Activated CD4-positive, alpha-beta memory T cell treated with anti-CD3 and anti-CD28 coated beads, Interleukin-2, amount 10 ng/mL, durations not matched to agents 7 days and 5 days (primary cell): ENCODE measurements at regions of chr2 and their contacts with region 1.

Region 1: DNA sequence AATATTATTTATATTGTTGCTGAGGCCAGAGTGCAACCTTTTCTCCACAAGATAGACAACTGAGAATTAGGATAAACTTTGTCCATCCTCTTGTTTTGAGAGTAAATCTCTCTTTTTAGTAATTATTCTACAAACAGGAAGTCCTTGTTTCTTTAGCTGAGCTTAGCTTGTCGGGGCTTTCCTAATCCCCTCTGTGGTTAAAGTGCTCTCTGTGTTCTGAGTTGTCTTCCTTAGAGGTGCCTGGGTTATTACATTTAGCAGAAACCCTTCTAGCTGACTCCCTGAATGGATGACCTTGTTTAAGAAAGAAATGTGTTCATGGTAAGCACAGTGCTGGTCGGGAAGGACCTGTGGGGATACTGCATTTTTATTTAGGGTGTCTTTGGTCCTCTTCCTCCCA is 12.7 kb downstream of the USP39 start:
- DNase-seq: no peak
- H3K4me3 Mint-ChIP-seq: no peak overlapping the region
- H3K27ac Mint-ChIP-seq: peak overlapping the region; percentile 59
- H3K4me1 Mint-ChIP-seq: peaks cover 14% of the 10 kb centered on the region
- H3K27me3 Mint-ChIP-seq: no peaks in the 10 kb centered on the region

Region 2: GRCh38 chr2:85611705-85612587 is 16.7 kb before region 1 on chr2 and contains the start of gene C2orf68:
- CTCF ChIA-PET with region 1: no interaction called
- POLR2A ChIA-PET with region 1: interaction called, 16 read pairs
- DNase-seq: peak; percentile 90
- H3K4me3 Mint-ChIP-seq: peak within 1 kb of the TSS; percentile 94
- H3K27ac Mint-ChIP-seq: peak within 1 kb of the TSS; percentile 86
- H3K4me1 Mint-ChIP-seq: peaks cover 46% of the 10 kb centered on the region
- H3K27me3 Mint-ChIP-seq: no peaks in the 10 kb centered on the region
- total RNA-seq, gene C2orf68: 48.8 to 50.9 TPM

Region 3: DNA sequence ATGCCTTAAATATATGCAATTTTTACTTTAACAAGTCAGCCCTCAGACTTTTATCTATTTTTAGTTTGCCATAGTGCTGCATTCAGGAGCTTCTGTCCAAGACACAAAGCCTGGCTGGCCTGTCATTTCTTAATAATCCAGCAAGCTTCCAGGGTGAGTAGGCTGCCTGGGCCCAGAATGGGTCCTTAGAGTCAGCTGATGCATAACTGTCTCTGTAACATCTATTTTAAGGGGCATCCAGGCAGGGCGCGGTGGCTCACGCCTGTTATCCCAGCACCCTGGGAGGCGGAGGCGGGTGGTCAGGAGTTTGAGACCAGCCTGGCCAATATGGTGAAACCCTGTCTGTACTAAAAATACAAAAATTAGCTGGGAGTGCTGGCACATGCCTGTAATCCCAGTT is 53.7 kb after region 1 on chr2:
- CTCF ChIA-PET with region 1: no interaction called
- POLR2A ChIA-PET with region 1: no interaction called
- DNase-seq: no peak
- H3K4me3 Mint-ChIP-seq: peak overlapping the region; percentile 87
- H3K27ac Mint-ChIP-seq: peak overlapping the region; percentile 94
- H3K4me1 Mint-ChIP-seq: peaks cover 38% of the 10 kb centered on the region
- H3K27me3 Mint-ChIP-seq: peaks cover 12% of the 10 kb centered on the region

Region 4: DNA sequence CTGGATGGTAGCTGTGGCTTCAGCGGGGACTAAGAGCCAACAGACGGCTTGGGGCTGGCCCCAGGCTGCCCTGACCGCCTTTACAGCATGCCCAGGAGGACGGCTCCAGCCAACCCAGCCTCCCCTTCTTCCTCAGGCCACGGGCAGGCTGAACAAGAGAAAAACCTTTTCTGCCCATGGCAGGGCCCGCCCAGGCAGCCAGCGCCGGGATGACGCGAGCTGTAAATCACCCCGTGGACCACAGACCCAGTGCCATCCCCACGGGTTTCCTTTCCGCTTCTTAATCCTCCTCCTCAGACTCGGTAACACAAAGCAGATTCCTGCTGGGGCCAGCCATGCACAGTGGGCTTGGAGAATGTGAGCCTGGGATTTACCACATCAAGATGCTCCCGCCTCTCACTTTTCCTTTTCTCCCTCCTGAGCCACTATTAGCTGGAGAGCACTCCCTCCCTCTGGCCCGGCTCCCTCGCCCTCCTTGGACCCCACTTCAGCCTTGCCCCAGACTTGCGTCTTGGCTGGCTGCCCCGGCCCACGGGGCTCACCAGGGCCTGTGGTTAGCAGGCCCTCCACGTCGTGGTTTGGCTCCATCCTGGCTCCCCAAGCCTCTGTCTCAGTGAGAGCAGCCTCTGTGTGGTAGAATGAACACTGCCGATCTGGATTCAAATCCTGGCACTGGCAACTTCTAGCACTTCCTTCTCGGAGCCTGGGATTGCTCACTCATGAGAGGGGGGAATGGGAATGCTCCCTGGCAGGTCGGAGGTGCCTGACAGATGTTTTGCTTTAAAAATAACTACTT is 156.6 kb after region 1 on chr2:
- CTCF ChIA-PET with region 1: no interaction called
- POLR2A ChIA-PET with region 1: no interaction called
- DNase-seq: no peak
- H3K4me3 Mint-ChIP-seq: no peak overlapping the region
- H3K27ac Mint-ChIP-seq: no peak overlapping the region
- H3K4me1 Mint-ChIP-seq: no peaks in the 10 kb centered on the region
- H3K27me3 Mint-ChIP-seq: peaks cover 11% of the 10 kb centered on the region

Region 5: DNA sequence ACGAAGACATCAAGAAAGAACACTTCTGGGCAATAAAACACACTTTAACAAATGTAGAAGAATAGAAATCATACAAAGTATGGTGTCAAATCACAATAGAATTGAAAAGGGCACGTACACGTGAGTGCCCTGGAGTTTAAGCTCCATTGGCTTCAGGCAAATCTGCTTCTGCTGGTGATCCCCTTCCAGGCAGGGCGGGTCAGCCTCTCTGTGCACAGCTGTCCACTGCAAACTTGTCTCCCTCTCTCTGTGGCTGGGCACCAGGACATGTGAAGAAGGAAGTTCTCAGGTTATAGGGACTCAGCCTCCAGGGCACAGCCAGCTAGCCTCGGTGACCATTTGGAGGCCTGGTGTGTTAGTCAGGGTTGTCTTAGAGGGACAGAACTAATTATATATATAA is 194.1 kb after region 1 on chr2:
- CTCF ChIA-PET with region 1: no interaction called
- POLR2A ChIA-PET with region 1: no interaction called
- DNase-seq: peak; percentile 15
- H3K4me3 Mint-ChIP-seq: no peak overlapping the region
- H3K27ac Mint-ChIP-seq: no peak overlapping the region
- H3K4me1 Mint-ChIP-seq: peaks cover 9% of the 10 kb centered on the region
- H3K27me3 Mint-ChIP-seq: peaks cover 48% of the 10 kb centered on the region